Endothelial cell of umbilical vein (primary cell): ENCODE measurements at regions of chr1 and their contacts with region 1.

Region 1: DNA sequence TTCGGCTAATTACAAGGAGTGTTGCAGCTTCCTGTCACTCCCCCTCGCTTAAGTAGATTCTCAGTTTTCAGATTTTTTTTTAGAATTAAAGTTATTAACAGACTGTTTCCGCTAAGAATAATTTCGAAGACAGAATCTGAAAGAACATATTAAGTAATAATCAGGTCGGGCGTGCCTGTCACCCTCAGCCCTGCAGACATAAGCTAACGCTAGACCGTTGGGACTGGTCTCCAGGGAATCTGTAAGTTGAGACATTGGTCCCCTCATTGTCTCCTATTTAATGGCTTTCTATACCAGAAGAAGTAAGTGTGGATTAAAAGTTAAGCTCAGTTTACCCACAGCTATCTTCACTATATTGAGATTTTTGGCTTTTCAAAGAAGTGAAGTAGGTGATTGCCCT is 14.5 kb downstream of the NMNAT1 start:
- DNase-seq: no peak
- H3K4me3 ChIP-seq: no peak overlapping the region
- H3K27ac ChIP-seq: no peak overlapping the region
- H3K4me1 ChIP-seq: no peaks in the 10 kb centered on the region
- H3K27me3 ChIP-seq: no peaks in the 10 kb centered on the region
- CTCF ChIP-seq: no peak
- POLR2A ChIP-seq: no peak

Region 2: DNA sequence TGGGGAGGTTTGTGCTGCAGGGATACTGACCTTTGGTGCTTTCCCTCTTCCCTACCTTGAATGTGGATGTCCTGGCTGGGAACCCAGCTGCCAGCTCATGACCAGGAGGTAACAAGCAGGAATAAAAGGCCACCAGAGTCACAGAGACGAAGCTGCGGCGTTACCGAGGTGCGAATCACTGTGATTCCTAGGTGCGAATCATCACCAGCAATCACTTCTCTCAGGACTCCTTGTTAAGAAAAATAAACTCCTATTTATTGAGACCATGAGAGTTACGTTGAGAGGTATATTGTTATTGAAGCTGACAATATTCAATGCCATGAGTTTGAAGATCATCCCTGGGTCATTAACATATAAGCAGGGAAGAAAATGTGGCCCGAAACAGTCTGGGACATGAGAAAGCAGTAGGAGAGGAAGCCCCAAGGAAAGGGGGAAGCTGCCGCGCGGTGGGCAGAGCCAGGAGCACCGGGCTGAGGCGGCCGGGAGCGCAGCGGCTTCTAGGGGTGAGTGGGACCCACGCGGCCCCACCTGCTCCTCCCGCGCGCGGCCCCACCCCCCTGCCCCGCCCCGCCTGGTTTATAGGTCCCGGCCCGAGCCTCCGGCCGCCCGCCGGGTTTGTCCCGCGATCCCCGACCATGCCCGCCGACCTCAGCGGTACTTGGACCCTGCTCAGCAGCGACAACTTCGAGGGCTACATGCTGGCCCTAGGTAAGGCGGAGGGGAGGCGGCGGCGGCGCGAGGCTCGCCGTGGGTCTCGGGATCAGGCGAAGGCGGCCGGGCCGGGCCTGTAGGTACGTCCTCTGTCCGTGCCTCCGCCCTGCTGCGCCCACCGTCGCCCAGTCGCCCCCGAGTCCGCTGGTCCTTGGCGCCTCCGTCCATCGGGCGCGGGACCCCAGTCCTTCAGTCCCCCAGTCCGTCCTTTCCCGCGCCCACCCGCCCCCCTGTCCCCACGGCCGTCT is 39.2 kb after region 1 on chr1 and contains the start of gene RBP7:
- CTCF ChIA-PET with region 1: no interaction called
- POLR2A ChIA-PET with region 1: no interaction called
- dilution Hi-C with region 1: no loop called
- intact Hi-C with region 1: loop called (anchors 5 kb)
- DNase-seq: no peak
- H3K4me3 ChIP-seq: no peak within 1 kb of the TSS
- H3K27ac ChIP-seq: no peak within 1 kb of the TSS
- H3K4me1 ChIP-seq: peaks cover 9% of the 10 kb centered on the region
- H3K27me3 ChIP-seq: peaks cover 24 to 51% of the 10 kb centered on the region in 2 experiments
- CTCF ChIP-seq: no peak
- POLR2A ChIP-seq: no peak
- total RNA-seq, gene RBP7: not detected in 2 replicates

Region 3: GRCh38 chr1:10019561-10019960 is 61.8 kb after region 1 on chr1:
- CTCF ChIA-PET with region 1: no interaction called
- POLR2A ChIA-PET with region 1: no interaction called
- dilution Hi-C with region 1: no loop called
- intact Hi-C with region 1: loop called (anchors 5 kb)
- DNase-seq: no peak
- H3K4me3 ChIP-seq: no peak overlapping the region
- H3K27ac ChIP-seq: no peak overlapping the region
- H3K4me1 ChIP-seq: no peaks in the 10 kb centered on the region
- H3K27me3 ChIP-seq: peaks cover 0 to 3% of the 10 kb centered on the region in 2 experiments
- CTCF ChIP-seq: no peak
- POLR2A ChIP-seq: no peak

Region 4: GRCh38 chr1:10338047-10338446 is 380.3 kb after region 1 on chr1:
- CTCF ChIA-PET with region 1: no interaction called
- POLR2A ChIA-PET with region 1: no interaction called
- dilution Hi-C with region 1: no loop called
- intact Hi-C with region 1: loop called (anchors 5 kb)
- DNase-seq: peak; percentile 58
- H3K4me3 ChIP-seq: no peak overlapping the region
- H3K27ac ChIP-seq: no peak overlapping the region
- H3K4me1 ChIP-seq: peaks cover 10% of the 10 kb centered on the region
- H3K27me3 ChIP-seq: no peaks in the 10 kb centered on the region
- CTCF ChIP-seq: peak; percentile 65 to 75
- POLR2A ChIP-seq: no peak